Activated naive CD4-positive, alpha-beta T cell treated with anti-CD3 and anti-CD28 coated beads for 36 hours (primary cell): ENCODE measurements at regions of chr2 and their contacts with region 1.

Region 1: DNA sequence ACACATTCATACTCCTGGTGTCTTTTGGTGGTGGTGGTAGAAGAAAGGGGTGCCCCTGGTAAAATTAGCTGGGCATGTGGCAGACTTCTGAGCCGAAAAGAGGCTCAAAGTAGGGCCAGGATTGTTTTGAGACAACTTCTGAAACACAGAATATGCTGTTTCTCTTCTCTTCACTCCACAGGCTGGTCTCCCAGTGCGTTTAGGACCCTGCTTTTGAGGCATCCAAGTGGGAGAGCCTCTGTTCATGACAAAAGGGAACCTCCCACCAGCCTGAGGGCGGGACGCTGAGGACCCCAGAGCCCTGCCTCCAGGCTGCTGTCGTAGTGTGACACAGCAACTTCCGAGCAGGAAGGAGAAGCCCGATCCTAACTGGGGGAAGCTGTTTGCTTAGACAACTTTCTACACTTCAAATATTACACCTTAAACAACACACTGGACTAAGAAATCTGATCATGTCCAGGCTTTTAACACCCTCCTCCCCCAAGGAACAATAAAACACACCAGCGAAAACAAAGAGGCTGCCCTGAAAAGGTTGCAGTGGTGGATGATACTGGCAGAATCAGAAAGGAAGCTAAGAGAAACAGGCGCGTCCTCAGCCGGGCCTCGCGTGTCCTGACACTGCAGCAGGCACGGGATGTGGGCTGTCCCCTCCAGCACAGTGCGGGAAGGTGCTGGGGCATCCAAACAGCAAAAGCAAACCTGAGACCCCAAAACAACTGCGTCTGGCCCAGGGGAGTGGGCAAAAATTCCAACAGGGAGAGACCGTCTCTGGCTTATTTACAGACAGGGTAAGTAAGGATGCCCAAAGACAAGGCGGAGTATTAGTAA is 9.3 kb downstream of the SERTAD2 start:
- DNase-seq: peak; percentile 78
- H3K4me3 Mint-ChIP-seq: peak overlapping the region; percentile 87
- H3K27ac Mint-ChIP-seq: peak overlapping the region; percentile 87
- H3K4me1 Mint-ChIP-seq: peaks cover 80% of the 10 kb centered on the region
- H3K27me3 Mint-ChIP-seq: no peaks in the 10 kb centered on the region

Region 2: DNA sequence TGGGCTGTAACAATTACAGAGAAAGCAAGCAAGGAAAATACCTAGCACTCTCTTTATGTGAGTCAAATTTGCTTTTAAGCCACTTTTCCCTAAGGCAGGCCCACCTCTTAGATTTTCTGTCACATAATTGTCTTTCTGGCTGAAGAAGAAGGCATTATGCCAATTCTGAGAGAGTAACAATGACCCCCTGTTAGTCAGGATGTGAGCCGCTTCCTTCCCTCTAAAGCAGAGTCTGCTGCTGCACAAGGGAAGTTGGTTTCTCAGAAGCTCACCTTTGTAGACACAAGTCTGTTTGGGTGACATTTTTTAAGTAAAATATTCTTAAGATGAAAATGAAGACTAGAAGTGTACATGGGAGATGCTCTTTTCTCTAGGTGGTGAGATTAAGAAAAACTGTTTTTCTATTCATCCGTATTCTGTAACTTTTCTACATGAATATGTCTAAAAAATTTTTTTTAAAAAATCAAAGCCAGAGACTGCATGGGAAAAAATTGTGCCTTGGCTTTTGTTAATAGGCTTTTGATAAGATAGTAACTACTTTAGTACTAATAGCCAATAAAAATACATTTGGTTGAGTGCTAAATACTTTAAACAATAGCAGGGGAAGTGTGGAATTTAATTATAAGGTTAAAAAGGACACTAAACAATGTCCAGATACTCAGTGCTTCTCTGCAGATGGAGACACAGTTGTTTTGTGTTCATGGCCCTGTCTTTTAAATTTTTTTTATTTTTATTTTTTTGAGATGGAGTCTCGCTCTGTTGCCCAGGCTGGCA is 591.7 kb before region 1 on chr2:
- CTCF ChIA-PET with region 1: no interaction called
- intact Hi-C with region 1: no loop called
- DNase-seq: peak; percentile 38
- H3K4me3 Mint-ChIP-seq: no peak overlapping the region
- H3K27ac Mint-ChIP-seq: peak overlapping the region; percentile 8
- H3K4me1 Mint-ChIP-seq: peaks cover 39% of the 10 kb centered on the region
- H3K27me3 Mint-ChIP-seq: no peaks in the 10 kb centered on the region

Region 3: DNA sequence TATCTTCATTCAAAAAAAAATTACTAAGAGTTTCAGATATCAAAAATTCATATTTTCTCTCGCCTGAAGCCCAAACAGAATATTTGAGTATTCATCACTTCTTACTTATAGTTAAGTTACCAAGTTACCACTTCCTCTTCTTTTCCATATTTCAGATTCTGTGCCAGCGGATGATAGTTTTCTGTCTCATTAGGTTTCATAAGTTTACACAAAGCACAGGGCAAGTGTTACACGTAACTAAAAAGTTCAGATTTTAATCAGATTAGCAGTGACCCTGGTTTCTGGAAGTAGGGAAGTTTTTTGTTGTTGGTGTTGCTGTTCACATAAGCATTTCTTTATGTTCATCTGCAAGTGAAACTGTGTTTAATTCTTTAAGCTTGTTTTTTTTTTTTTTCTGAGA is 110.0 kb before region 1 on chr2:
- CTCF ChIA-PET with region 1: no interaction called
- intact Hi-C with region 1: no loop called
- DNase-seq: no peak
- H3K4me3 Mint-ChIP-seq: no peak overlapping the region
- H3K27ac Mint-ChIP-seq: no peak overlapping the region
- H3K4me1 Mint-ChIP-seq: peaks cover 67% of the 10 kb centered on the region
- H3K27me3 Mint-ChIP-seq: no peaks in the 10 kb centered on the region

Region 4: GRCh38 chr2:64586883-64587481 is 57.4 kb before region 1 on chr2:
- CTCF ChIA-PET with region 1: interaction called, 6 read pairs
- intact Hi-C with region 1: loop called (anchors 1 kb)
- DNase-seq: no peak
- H3K4me3 Mint-ChIP-seq: no peak overlapping the region
- H3K27ac Mint-ChIP-seq: no peak overlapping the region
- H3K4me1 Mint-ChIP-seq: peaks cover 16% of the 10 kb centered on the region
- H3K27me3 Mint-ChIP-seq: no peaks in the 10 kb centered on the region

Region 5: DNA sequence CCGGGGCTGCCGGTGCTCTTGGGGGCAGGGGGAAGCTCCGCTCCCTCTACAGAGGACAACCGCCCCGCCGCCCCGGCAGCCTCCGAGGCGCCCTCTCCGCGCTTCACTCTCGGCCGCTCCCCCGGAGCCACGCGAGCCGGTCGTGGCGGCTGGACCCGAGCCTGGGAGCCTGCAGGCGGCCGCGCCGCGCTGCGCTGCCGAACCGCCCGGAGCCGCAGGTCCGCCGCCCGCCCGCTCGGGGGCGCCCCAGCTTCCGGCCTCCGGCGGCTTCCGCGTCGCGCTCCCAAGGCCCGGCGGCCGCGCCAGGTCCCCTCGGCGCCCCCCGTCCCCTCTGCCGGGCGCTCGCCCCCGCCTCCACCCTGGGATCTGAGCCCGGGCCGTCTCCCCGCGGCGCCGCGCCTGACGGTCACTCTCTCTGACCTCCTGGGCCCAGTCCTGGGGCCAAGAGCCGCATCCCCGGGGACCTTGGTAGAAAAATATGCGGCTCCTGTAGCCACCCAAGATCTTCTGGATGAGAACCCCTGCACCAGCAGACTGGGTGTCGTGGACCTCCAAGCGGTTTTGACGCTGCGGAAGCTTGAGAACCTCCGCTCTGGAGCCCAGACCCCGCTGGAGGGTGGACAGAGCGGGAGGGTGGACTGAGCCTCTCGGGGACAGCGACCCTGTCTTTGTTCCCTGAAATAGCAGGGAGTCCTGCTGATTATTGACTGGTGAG is 35.0 kb before region 1 on chr2:
- CTCF ChIA-PET with region 1: interaction called, 8 read pairs
- intact Hi-C with region 1: loop called (anchors 2 kb)
- DNase-seq: peak; percentile 62
- H3K4me3 Mint-ChIP-seq: peak overlapping the region; percentile 65
- H3K27ac Mint-ChIP-seq: no peak overlapping the region
- H3K4me1 Mint-ChIP-seq: peaks cover 24% of the 10 kb centered on the region
- H3K27me3 Mint-ChIP-seq: no peaks in the 10 kb centered on the region

Region 6: GRCh38 chr2:64743739-64744330 is 99.4 kb after region 1 on chr2:
- CTCF ChIA-PET with region 1: interaction called, 32 read pairs
- intact Hi-C with region 1: no loop called
- DNase-seq: no peak
- H3K4me3 Mint-ChIP-seq: no peak overlapping the region
- H3K27ac Mint-ChIP-seq: no peak overlapping the region
- H3K4me1 Mint-ChIP-seq: peaks cover 16% of the 10 kb centered on the region
- H3K27me3 Mint-ChIP-seq: no peaks in the 10 kb centered on the region

Region 7: GRCh38 chr2:64767670-64768468 is 123.5 kb after region 1 on chr2:
- CTCF ChIA-PET with region 1: interaction called, 6 read pairs
- intact Hi-C with region 1: loop called (anchors 1 kb)
- DNase-seq: peak; percentile 85
- H3K4me3 Mint-ChIP-seq: peak overlapping the region; percentile 80
- H3K27ac Mint-ChIP-seq: peak overlapping the region; percentile 76
- H3K4me1 Mint-ChIP-seq: peaks cover 26% of the 10 kb centered on the region
- H3K27me3 Mint-ChIP-seq: no peaks in the 10 kb centered on the region

Region 8: DNA sequence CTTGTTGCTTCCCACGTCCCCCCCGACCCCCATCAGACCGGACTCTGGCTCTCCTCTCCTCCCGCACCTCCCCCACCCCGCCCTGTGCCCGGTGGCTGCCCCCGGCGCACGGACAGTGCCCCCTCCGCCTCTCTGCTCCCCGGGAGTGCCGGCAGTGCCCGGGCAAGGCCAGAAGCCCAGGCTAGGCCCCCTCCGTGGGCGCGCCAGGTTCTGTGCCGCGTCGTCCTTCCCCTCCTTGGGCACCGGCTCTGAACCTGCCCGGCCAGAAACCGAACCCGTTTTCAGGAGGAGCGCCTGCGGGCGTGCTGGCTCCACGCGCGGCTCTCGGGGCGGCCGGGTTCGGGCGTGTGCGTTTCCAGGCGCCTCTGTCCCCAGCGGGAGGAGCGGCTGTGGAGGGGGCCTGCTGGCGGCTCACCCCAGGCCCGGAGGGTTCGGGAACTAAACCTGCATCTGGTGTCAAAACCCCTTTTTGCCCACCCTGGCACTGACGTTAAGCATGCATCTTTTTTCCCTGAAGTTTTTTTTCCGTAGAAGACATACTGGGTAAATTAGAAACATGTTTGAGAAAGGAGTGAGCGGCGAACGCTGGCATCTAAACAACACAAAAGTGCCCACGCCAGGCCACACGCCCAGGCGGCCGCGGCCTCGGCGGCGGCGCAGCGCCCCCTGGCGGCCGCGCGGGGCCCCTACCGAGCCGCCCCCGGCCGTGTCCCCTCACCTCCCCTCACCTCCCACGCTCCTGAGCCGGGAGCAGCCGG is 220.9 kb after region 1 on chr2:
- CTCF ChIA-PET with region 1: interaction called, 8 read pairs
- intact Hi-C with region 1: loop called (anchors 1 kb)
- DNase-seq: peak; percentile 59
- H3K4me3 Mint-ChIP-seq: peak overlapping the region; percentile 55
- H3K27ac Mint-ChIP-seq: no peak overlapping the region
- H3K4me1 Mint-ChIP-seq: no peaks in the 10 kb centered on the region
- H3K27me3 Mint-ChIP-seq: peaks cover 3% of the 10 kb centered on the region